Naive thymus-derived CD4-positive, alpha-beta T cell (primary cell): ENCODE measurements at regions of chr1 and their contacts with region 1.

Region 1: DNA sequence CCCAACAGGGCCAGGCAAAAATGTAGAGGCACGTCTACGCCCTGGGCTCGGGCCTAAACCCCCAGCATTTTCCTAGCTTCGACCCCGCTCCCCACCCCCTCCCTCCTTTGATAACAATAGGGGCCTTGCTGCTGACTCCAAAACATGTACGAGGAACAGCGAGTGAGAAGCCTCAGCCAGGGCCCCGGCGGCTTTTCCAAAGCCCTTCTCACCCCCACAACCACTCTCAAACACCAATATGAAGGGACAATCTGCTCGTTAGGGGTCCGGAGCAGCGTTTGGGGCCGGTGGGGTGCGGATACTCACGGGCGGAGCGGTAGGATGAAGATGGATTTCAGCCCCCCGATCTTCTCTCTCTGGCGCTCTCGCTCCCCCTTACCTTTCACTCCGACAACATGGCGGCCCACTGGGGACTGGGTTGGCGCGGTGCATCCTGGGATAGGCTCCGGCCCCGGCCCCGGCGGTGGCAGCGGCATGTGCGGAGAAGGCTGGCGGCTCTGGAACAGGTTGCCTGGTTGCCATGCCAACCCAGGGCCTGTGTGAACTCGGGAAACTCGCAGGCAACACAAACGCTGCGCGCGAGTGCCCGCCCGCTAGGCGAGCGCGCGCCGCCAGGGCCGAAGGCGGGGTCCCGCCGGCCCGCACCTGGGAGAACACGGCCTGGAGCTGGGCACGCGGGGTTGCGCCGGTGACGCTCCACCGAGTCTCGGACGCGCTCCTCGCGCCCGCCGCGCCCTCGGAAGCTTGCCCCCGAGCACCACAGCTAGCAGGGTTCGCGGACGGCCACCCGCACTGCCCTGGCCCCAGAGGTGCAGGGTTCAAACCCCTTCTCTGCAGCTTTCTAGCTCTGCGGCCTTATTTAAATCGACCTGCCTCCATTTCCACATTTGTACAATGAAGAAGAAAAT is at the start of gene PUM1:
- DNase-seq: peak; percentile 95 to 99 (median 97)
- ATAC-seq: peak; percentile 99
- H3K4me3 ChIP-seq: peak within 1 kb of the TSS; percentile 97
- H3K4me3 Mint-ChIP-seq: peak within 1 kb of the TSS; percentile 96 to 100 (median 98)
- H3K27ac ChIP-seq: peak within 1 kb of the TSS; percentile 95
- H3K27ac Mint-ChIP-seq: peak within 1 kb of the TSS; percentile 97 to 99 (median 98)
- H3K4me1 ChIP-seq: peaks cover 10 to 18% of the 10 kb centered on the region in 2 donors
- H3K4me1 Mint-ChIP-seq: peaks cover 20 to 38% (median 29%) of the 10 kb centered on the region in 7 donors
- H3K27me3 ChIP-seq: no peaks in the 10 kb centered on the region
- H3K27me3 Mint-ChIP-seq: no peaks in the 10 kb centered on the region
- total RNA-seq, gene PUM1: 114 to 226 (median 174) TPM

Region 2: DNA sequence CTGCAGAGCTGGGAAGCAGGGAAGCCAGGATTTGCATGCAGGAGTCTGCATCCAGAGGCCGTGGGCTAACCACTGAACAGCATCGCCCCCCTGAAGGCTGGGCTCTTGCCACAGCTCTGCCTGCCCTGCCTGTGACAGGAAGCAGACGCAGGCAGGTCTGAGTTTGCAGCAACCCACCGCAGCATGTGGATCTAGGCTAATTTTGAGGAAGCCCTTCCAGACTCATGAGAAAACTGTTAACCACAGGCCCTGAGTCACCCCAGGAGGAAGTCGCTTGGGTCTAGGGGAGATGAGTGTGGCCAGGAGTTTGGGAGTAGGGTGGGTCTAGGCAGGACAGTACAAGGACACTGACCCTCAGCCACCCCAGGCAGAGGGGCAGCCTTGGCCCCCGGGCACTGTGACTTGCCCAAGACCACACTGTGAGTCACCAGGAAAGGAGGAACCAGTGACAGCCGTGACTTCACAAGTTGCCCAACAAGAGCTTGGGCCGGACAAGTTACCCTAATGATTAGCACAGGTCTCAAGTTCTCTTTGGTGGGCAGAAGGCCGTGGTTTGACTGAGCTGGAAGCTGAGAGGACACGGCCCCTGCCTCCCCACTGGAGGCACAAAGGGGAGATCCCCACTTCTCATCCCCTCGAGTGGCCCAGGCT is 308.9 kb before region 1 on chr1:
- CTCF ChIA-PET with region 1: no interaction called
- POLR2A ChIA-PET with region 1: no interaction called
- intact Hi-C with region 1: loop called in 1 of 2 experiments (anchors 10 kb)
- DNase-seq: peak; percentile 45 to 77 (median 65)
- ATAC-seq: peak; percentile 77
- H3K4me3 ChIP-seq: peak overlapping the region; percentile 80
- H3K4me3 Mint-ChIP-seq: peak overlapping the region; percentile 95 to 100 (median 98)
- H3K27ac ChIP-seq: peak overlapping the region; percentile 98
- H3K27ac Mint-ChIP-seq: peak overlapping the region; percentile 90 to 100 (median 97)
- H3K4me1 ChIP-seq: peaks cover 58 to 67% of the 10 kb centered on the region in 2 donors
- H3K4me1 Mint-ChIP-seq: peaks cover 68 to 90% (median 82%) of the 10 kb centered on the region in 7 donors
- H3K27me3 ChIP-seq: no peaks in the 10 kb centered on the region
- H3K27me3 Mint-ChIP-seq: no peaks in the 10 kb centered on the region

Region 3: GRCh38 chr1:31010086-31010989 is 55.2 kb before region 1 on chr1:
- CTCF ChIA-PET with region 1: interaction called, 4 read pairs
- POLR2A ChIA-PET with region 1: interaction called, 3 read pairs
- intact Hi-C with region 1: loop called (anchors 10 kb)
- DNase-seq: peak in 1 of 9 donors; percentile 10
- ATAC-seq: peak; percentile 56
- H3K4me3 ChIP-seq: no peak overlapping the region
- H3K4me3 Mint-ChIP-seq: peak overlapping the region in 9 of 10 donors; percentile 0 to 42 (median 10)
- H3K27ac ChIP-seq: no peak overlapping the region
- H3K27ac Mint-ChIP-seq: peak overlapping the region in 8 of 9 donors; percentile 3 to 70 (median 34)
- H3K4me1 ChIP-seq: peaks cover 18 to 33% of the 10 kb centered on the region in 2 donors
- H3K4me1 Mint-ChIP-seq: peaks cover 55 to 82% (median 76%) of the 10 kb centered on the region in 7 donors
- H3K27me3 ChIP-seq: no peaks in the 10 kb centered on the region
- H3K27me3 Mint-ChIP-seq: no peaks in the 10 kb centered on the region

Region 4: DNA sequence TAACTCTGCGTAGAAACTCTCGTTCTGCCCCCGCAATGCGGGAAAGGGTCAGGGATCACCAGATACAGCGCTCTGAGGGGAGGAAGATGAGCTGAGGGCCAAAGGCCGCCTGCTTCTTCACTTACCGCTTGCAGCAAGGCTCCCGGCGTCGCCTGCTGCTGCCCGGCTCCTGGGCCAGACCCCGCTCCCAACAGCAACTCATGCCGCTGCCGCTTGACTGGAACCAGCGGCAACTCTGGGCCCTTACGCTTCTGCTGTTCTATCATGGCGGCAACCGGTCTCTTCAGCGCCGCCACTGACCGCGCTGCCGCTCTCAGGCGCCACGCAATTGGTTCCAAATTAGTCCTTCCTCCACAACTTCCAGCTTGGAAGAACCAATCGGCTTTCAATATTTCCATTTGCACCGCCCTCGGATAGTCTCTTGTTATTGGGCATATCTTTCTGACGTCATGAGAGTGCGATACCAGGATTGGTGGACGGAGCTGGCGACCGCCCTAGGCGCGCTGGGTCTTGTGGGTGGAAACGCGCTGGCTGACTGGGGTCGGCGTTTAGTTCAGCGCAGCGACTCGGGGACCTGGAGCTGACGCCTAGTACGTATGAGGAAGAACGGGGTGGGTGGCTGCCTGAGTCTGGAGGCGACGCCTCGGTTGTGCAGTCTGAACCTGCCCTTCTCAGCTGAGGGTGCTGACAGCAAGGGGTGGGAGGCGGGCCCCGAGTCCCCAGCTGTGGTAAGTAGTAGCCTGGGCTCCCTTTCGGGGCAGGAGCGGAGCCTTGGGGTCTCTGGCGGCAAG is 231.1 kb after region 1 on chr1 and contains the starts of genes SNRNP40 and ZCCHC17:
- CTCF ChIA-PET with region 1: no interaction called
- POLR2A ChIA-PET with region 1: no interaction called
- intact Hi-C with region 1: loop called in 1 of 2 experiments (anchors 1 kb)
- DNase-seq: peak; percentile 73 to 99 (median 98)
- ATAC-seq: peak; percentile 97
- H3K4me3 ChIP-seq: peak within 1 kb of the TSS; percentile 89
- H3K4me3 Mint-ChIP-seq: no peak within 1 kb of the TSS
- H3K27ac ChIP-seq: peak within 1 kb of the TSS; percentile 92
- H3K27ac Mint-ChIP-seq: peak within 1 kb of the TSS in 1 of 9 donors; percentile 84
- H3K4me1 ChIP-seq: peaks cover 18 to 24% of the 10 kb centered on the region in 2 donors
- H3K4me1 Mint-ChIP-seq: peaks cover 12 to 41% (median 27%) of the 10 kb centered on the region in 7 donors
- H3K27me3 ChIP-seq: no peaks in the 10 kb centered on the region
- H3K27me3 Mint-ChIP-seq: no peaks in the 10 kb centered on the region
- total RNA-seq, gene SNRNP40: 53.5 to 88.5 (median 62.1) TPM
- total RNA-seq, gene ZCCHC17: 10.3 to 23.8 (median 20.1) TPM